Psoas muscle (tissue), 8 donors: ENCODE measurements at regions of chr6 and their contacts with region 1.

Region 1: DNA sequence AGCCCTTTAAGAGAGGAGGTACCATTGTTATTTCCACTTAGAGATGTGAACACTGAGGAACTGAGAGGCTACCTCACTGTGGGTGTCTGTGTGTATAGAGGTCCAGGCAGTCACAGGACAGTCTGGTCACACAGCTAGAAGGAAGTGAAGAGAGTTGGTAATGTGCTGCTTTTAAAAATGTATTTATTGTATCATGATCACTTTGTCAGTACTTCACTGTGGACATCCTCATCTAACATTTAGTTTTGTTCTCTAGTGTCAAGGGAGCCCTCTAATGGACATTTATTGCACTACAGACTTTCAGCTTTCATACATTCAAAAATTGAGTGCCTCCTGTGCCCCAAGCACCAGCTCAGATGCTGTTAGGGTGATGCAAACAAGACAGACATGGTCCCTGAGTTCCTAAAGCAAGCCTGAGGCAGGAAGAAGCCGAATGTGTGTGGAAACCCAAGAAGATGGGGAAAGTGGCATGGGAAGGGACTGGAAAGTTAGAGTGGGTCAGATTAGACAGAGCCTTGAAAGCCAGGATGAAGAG is 123.0 kb downstream of the SLC16A10 start:
- DNase-seq: no peak
- ATAC-seq: peak; percentile 56 to 78 (median 70)
- H3K4me3 ChIP-seq: no peak overlapping the region
- H3K27ac ChIP-seq: peak overlapping the region; percentile 70
- H3K4me1 ChIP-seq: peaks cover 28% of the 10 kb centered on the region
- H3K27me3 ChIP-seq: no peaks in the 10 kb centered on the region
- CTCF ChIP-seq: peak; percentile 72

Region 2: DNA sequence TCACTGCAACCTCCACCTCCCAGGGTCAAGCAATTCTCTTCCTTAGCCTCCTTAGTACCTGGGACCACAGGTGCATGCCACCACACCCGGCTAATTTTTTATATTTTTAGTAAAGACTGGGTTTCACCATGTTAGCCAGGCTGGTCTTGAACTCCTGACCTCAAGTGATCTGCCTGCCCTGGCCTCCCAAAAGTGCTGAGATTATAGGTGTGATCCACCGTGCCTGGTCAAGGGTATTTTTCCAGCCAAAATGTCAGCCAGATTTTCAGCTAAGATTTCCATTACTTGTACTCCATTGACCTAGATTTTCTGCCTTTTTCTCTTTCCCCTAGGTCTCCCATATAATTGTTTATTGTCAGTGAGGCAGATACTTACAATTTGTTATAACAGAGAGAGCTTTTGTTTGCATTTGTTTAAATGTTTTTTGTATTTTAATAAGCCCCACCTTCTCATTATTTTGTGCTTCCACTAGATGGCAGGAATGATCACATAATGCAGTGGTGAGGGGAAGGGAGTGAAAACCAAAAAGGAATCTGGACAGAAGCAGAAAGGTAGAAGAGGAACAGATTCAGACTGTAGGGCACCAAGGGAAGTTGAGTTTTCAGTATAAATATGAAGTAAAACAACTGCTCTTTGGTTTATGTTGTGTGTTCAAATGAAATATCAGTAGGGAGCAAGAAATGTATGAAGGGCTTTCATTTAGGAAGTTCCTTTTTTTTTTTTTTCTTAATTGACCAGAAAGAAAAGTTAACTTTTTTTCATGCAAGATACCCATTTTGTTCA is 198.7 kb before region 1 on chr6:
- intact Hi-C with region 1: loop called (anchors 5 kb)
- DNase-seq: no peak
- ATAC-seq: peak; percentile 70 to 83 (median 77)
- H3K4me3 ChIP-seq: no peak overlapping the region
- H3K27ac ChIP-seq: no peak overlapping the region
- H3K4me1 ChIP-seq: peaks cover 21% of the 10 kb centered on the region
- H3K27me3 ChIP-seq: no peaks in the 10 kb centered on the region
- CTCF ChIP-seq: peak; percentile 60

Region 3: DNA sequence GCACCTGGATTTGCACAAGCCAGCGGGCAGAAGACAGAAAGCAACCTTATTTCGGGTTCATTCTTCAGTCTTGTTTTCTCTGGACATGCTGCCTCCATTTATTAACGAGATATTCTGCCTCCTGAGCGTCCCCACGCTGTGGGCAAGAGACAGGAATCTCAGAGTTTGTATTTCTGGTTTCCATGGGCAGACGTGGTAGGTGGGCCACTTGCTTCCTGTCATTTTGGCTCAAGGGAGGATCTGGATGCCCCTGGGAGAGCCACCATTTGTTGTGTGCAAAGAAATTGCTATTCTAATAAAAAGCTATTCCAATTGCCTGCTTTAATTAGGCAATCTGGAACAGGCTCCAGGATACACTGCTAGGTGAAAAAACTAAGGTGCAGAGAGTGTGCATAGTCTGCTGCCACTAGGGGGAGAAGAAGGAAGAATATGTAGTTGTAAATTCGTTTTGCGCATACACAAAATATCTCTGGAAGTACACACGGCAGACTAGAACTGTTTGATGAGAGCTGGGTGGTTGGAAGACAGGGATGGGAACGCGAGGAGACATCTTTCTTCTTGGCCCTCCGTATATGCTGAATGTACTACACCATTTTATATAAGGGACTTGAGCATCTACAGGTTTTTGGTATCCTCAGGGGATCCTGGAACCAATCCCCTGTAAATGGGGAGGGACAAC is 153.0 kb before region 1 on chr6:
- intact Hi-C with region 1: loop called (anchors 2 to 5 kb)
- DNase-seq: no peak
- ATAC-seq: peak; percentile 43 to 95 (median 78)
- H3K4me3 ChIP-seq: no peak overlapping the region
- H3K27ac ChIP-seq: no peak overlapping the region
- H3K4me1 ChIP-seq: no peaks in the 10 kb centered on the region
- H3K27me3 ChIP-seq: no peaks in the 10 kb centered on the region
- CTCF ChIP-seq: peak; percentile 65

Region 4: DNA sequence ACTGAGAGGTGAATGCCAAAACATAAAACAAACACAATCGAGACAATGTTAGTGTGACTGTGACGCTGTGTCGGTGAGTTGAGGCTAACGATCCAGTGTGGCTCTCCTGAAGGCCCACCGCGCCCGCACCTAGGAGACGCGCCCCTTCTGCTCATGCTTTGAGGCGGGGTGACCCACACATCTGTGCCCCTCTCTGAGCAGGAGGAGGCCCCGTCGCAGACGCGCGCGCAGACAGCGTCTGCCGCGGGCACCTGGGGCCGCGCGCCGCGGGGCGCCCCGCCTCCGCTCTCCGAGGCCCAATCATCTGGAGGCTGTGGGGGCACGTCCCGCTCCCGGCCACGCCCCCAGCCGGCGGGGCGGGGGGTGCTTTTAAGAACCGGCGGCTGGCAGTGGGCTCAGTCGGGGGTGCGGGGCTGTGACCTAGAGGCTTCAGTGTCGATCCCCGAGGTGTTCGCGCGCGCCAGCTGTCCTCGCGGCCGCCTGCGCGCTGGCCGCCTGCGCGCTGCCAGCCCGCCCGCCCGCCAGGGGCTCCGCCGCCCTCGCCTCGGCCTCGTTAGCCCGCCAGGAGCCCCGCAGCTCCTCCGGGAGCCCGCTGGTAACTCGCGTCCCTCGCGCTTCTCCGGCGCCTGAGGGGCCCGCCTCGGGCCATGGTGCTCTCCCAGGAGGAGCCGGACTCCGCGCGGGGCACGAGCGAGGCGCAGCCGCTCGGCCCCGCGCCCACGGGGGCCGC is 123.0 kb before region 1 on chr6 and contains the start of gene SLC16A10:
- intact Hi-C with region 1: loop called in 1 of 2 experiments (anchors 10 kb)
- DNase-seq: peak; percentile 82 to 94
- ATAC-seq: peak; percentile 89 to 94 (median 92)
- H3K4me3 ChIP-seq: peak within 1 kb of the TSS; percentile 92
- H3K27ac ChIP-seq: peak within 1 kb of the TSS; percentile 87
- H3K4me1 ChIP-seq: peaks cover 11% of the 10 kb centered on the region
- H3K27me3 ChIP-seq: peaks cover 0 to 7% (median 3%) of the 10 kb centered on the region in 3 donors
- CTCF ChIP-seq: peak; percentile 13
- total RNA-seq, gene SLC16A10: 33.9 to 106 (median 56.1) TPM